ENCODE measurements at regions of chr22 and their contacts with region 1.

Region 1: GRCh38 chr22:35914665-35915476 is 113.8 kb downstream of the RBFOX2 start:
- DNase-seq: peak; percentile 43 to 73
- H3K4me3 ChIP-seq: peak overlapping the region; percentile 31 to 40
- H3K27ac ChIP-seq: peak overlapping the region; percentile 74 to 86
- H3K4me1 ChIP-seq: peaks cover 5 to 17% of the 10 kb centered on the region in 2 donors
- H3K27me3 ChIP-seq: no peaks in the 10 kb centered on the region
- CTCF ChIP-seq: no peak
- POLR2A ChIP-seq: no peak

Region 2: GRCh38 chr22:35648066-35649025 is 266.5 kb before region 1 on chr22 and contains the start of gene APOL6:
- intact Hi-C with region 1: loop called (anchors 5 kb)
- DNase-seq: peak in 1 of 2 donors; percentile 56
- H3K4me3 ChIP-seq: peak within 1 kb of the TSS; percentile 65 to 69
- H3K27ac ChIP-seq: peak within 1 kb of the TSS; percentile 88 to 89
- H3K4me1 ChIP-seq: peaks cover 8 to 10% of the 10 kb centered on the region in 2 donors
- H3K27me3 ChIP-seq: no peaks in the 10 kb centered on the region
- CTCF ChIP-seq: no peak
- POLR2A ChIP-seq: peak; percentile 17 to 31
- total RNA-seq, gene APOL6: 5.3 to 19.8 (median 13.0) TPM

Region 3: GRCh38 chr22:35840302-35840739 is 74.5 kb before region 1 on chr22:
- intact Hi-C with region 1: loop called (anchors 10 kb)
- DNase-seq: peak; percentile 90 to 94
- H3K4me3 ChIP-seq: peak overlapping the region; percentile 49
- H3K27ac ChIP-seq: peak overlapping the region; percentile 87 to 93
- H3K4me1 ChIP-seq: peaks cover 0 to 18% of the 10 kb centered on the region in 2 donors
- H3K27me3 ChIP-seq: no peaks in the 10 kb centered on the region
- CTCF ChIP-seq: no peak
- POLR2A ChIP-seq: peak in 1 of 2 donors; percentile 31

Region 4: GRCh38 chr22:35961480-35962295 is 46.8 kb after region 1 on chr22:
- intact Hi-C with region 1: no loop called
- DNase-seq: peak; percentile 59 to 73
- H3K4me3 ChIP-seq: no peak overlapping the region
- H3K27ac ChIP-seq: peak overlapping the region; percentile 65 to 79
- H3K4me1 ChIP-seq: peaks cover 0 to 12% of the 10 kb centered on the region in 2 donors
- H3K27me3 ChIP-seq: no peaks in the 10 kb centered on the region
- CTCF ChIP-seq: peak in 1 of 4 experiments; percentile 6
- POLR2A ChIP-seq: no peak